ENCODE measurements at regions of chr1 and their contacts with region 1.

Region 1: GRCh38 chr1:7902478-7903085 is 38.1 kb downstream of the TNFRSF9 start:
- DNase-seq: peak; percentile 74
- ATAC-seq: peak; percentile 87
- H3K4me3 Mint-ChIP-seq: peak overlapping the region; percentile 50
- H3K27ac Mint-ChIP-seq: no peak overlapping the region
- H3K4me1 Mint-ChIP-seq: peaks cover 17% of the 10 kb centered on the region
- H3K27me3 Mint-ChIP-seq: no peaks in the 10 kb centered on the region

Region 2: GRCh38 chr1:7745791-7746190 is 156.8 kb before region 1 on chr1:
- CTCF ChIA-PET with region 1: no interaction called
- POLR2A ChIA-PET with region 1: no interaction called
- DNase-seq: peak; percentile 8
- ATAC-seq: no peak
- H3K4me3 Mint-ChIP-seq: no peak overlapping the region
- H3K27ac Mint-ChIP-seq: no peak overlapping the region
- H3K4me1 Mint-ChIP-seq: peaks cover 3% of the 10 kb centered on the region
- H3K27me3 Mint-ChIP-seq: peaks cover 3% of the 10 kb centered on the region

Region 3: DNA sequence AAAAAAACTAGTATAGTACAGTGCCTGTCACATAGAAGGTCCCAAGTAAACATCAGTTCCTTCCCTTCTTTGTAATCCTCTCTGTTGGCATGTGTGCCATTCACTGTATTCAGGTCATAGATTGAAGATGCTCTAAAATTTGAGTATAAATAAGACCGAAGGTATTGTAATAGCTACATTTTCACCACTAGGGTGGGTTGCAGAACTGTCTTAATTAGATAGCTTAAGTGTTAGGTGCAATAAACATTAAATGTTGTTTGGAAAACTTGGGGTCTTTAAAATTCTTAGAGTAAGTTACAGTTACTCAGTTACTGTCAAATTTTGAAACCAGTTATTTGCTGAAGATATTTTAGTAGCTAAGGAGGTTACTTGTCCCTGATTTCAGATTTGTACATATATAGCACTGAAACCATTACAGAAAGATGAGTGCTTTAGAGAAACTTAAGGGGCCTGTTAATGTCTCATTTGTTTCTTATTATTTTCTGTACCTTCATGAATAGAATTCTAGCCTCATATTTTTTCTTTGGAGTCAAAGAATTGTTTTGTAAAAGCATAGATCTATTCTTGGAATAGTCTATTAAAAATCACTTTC is 94.2 kb before region 1 on chr1:
- CTCF ChIA-PET with region 1: interaction called, 13 read pairs
- POLR2A ChIA-PET with region 1: no interaction called
- DNase-seq: no peak
- ATAC-seq: no peak
- H3K4me3 Mint-ChIP-seq: no peak overlapping the region
- H3K27ac Mint-ChIP-seq: no peak overlapping the region
- H3K4me1 Mint-ChIP-seq: no peaks in the 10 kb centered on the region
- H3K27me3 Mint-ChIP-seq: no peaks in the 10 kb centered on the region

Region 4: DNA sequence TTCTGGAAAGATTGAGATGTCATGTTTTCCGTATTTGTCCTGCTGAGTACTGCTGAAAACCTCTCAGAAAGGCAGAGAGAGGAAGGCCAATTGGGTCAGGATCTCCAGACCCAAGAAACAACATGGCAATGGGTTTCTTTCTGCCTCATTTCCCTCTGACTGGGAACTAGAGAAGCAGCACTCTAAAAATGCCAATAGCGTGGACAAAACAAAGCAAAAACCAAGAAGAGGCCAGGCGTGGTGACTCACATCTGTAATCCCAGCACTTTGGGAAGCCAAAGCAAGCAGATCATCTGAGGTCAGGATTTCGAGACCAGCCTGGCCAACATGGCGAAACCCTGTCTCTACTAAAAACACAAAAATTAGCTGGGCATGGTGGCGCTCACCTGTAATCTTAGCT is 19.7 kb after region 1 on chr1:
- CTCF ChIA-PET with region 1: interaction called, 10 read pairs
- POLR2A ChIA-PET with region 1: no interaction called
- DNase-seq: no peak
- ATAC-seq: no peak
- H3K4me3 Mint-ChIP-seq: no peak overlapping the region
- H3K27ac Mint-ChIP-seq: no peak overlapping the region
- H3K4me1 Mint-ChIP-seq: peaks cover 14% of the 10 kb centered on the region
- H3K27me3 Mint-ChIP-seq: no peaks in the 10 kb centered on the region

Measured in activated CD8-positive, alpha-beta T cell treated with anti-CD3 and anti-CD28 coated beads, Interleukin-2, amount 10 ng/mL, durations not matched to agents 7 days and 5 days (primary cell).